Esophagus muscularis mucosa (tissue), 4 donors: ENCODE measurements at regions of chr5 and their contacts with region 1.

Region 1: GRCh38 chr5:98454904-98455303 is 318.6 kb upstream of the RGMB start:
- DNase-seq: no peak
- H3K4me3 ChIP-seq: no peak overlapping the region
- H3K27ac ChIP-seq: peak overlapping the region in 2 of 4 donors; percentile 24 to 27
- H3K4me1 ChIP-seq: peaks cover 0 to 18% (median 14%) of the 10 kb centered on the region in 4 donors
- H3K27me3 ChIP-seq: no peaks in the 10 kb centered on the region
- CTCF ChIP-seq: peak in 1 of 3 experiments; percentile 17
- EP300 ChIP-seq: no peak
- POLR2A ChIP-seq: no peak

Region 2: GRCh38 chr5:98768160-98769005 is 313.5 kb after region 1 on chr5:
- intact Hi-C with region 1: loop called (anchors 10 kb)
- DNase-seq: no peak
- H3K4me3 ChIP-seq: peak overlapping the region; percentile 81 to 94 (median 90)
- H3K27ac ChIP-seq: peak overlapping the region; percentile 93 to 94 (median 93)
- H3K4me1 ChIP-seq: peaks cover 13 to 39% (median 32%) of the 10 kb centered on the region in 4 donors
- H3K27me3 ChIP-seq: no peaks in the 10 kb centered on the region
- CTCF ChIP-seq: peak; percentile 79 to 93 (median 88)
- EP300 ChIP-seq: no peak
- POLR2A ChIP-seq: no peak